Aorta (tissue), 5 donors: ENCODE measurements at regions of chr1 and their contacts with region 1.

Region 1: DNA sequence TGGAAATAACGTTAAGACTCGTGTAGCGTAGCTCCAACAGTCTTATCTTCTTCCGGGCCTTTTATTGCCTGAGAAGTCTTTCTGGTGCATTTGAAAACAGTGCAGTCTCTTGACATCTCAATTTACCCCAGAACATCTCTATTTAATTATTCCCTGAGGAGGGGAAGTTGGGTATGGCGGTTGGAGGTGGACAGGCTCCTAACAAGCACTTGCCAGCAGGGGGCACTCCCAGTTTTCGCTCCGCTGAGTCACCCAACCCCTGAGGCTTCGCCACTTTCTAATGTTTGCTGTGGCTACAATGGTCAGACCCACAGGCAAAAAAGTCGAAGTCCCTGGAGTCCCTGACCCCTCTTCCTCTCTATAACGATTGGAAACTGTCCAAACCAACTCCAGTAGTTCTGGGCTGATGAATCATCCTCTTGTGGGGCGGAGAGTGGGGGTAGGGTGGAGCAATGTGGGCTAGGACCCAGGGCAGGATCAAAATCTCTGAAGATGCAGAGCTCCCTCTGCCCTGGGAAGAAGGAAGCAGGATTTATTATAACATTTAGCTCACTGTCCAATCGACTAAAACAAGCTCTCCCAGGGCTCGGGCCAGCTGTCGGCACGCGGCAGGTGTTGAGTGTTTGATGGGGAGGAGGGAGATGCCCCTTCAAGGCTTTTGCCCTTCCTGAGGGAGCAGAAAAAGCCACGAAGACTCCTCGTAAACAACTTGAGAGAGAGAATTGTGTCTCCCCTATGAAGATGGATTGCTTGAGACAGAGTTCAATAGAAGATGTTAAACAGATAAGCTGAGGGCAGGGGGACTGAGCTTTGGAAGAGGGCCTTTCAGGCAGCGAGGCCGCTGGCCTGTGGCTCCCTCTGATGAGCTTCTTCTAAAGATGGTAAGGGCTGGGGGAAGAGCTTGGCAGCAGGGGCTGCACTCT is 85.7 kb downstream of the BRINP2 start:
- DNase-seq: peak; percentile 71 to 88
- ATAC-seq: peak; percentile 83
- H3K4me3 ChIP-seq: no peak overlapping the region
- H3K27ac ChIP-seq: no peak overlapping the region
- H3K4me1 ChIP-seq: no peaks in the 10 kb centered on the region
- H3K27me3 ChIP-seq: no peaks in the 10 kb centered on the region

Region 2: GRCh38 chr1:177307771-177308170 is 51.4 kb after region 1 on chr1:
- intact Hi-C with region 1: loop called in 1 of 2 experiments (anchors 2 kb)
- DNase-seq: no peak
- ATAC-seq: no peak
- H3K4me3 ChIP-seq: no peak overlapping the region
- H3K27ac ChIP-seq: no peak overlapping the region
- H3K4me1 ChIP-seq: no peaks in the 10 kb centered on the region
- H3K27me3 ChIP-seq: no peaks in the 10 kb centered on the region

Region 3: DNA sequence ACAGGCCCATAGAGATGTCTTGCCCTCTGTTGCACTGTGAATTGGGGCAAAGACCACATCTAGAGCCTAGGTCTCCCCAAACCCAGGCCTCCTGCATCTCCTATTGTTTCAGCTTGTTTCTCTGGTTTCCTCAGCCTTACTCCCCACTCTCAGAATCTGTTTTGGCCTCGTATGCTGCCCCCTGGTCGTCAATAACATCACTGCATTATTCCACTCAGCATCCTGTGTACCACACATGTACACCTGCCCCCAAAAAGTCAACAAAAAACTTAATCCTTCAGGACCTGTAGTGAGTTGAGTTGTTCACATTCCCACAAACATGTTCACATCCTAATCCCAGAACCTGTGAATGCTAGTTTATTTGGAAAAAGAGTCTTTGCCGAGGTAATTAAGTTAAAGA is 99.2 kb after region 1 on chr1:
- intact Hi-C with region 1: loop called in 1 of 2 experiments (anchors 5 kb)
- DNase-seq: no peak
- ATAC-seq: no peak
- H3K4me3 ChIP-seq: no peak overlapping the region
- H3K27ac ChIP-seq: no peak overlapping the region
- H3K4me1 ChIP-seq: no peaks in the 10 kb centered on the region
- H3K27me3 ChIP-seq: no peaks in the 10 kb centered on the region

Region 4: GRCh38 chr1:177948336-177948972 is 692.0 kb after region 1 on chr1:
- intact Hi-C with region 1: loop called in 1 of 2 experiments (anchors 10 kb)
- DNase-seq: no peak
- ATAC-seq: peak; percentile 76
- H3K4me3 ChIP-seq: no peak overlapping the region
- H3K27ac ChIP-seq: no peak overlapping the region
- H3K4me1 ChIP-seq: no peaks in the 10 kb centered on the region
- H3K27me3 ChIP-seq: no peaks in the 10 kb centered on the region